ENCODE measurements at regions of chr1 and their contacts with region 1.

Region 1: GRCh38 chr1:11907275-11908094 is 18.7 kb downstream of the KIAA2013 start:
- DNase-seq: peak; percentile 93
- H3K4me3 Mint-ChIP-seq: peak overlapping the region; percentile 81
- H3K27ac Mint-ChIP-seq: peak overlapping the region; percentile 98
- H3K4me1 Mint-ChIP-seq: peaks cover 46% of the 10 kb centered on the region
- H3K27me3 Mint-ChIP-seq: peaks cover 16% of the 10 kb centered on the region

Region 2: DNA sequence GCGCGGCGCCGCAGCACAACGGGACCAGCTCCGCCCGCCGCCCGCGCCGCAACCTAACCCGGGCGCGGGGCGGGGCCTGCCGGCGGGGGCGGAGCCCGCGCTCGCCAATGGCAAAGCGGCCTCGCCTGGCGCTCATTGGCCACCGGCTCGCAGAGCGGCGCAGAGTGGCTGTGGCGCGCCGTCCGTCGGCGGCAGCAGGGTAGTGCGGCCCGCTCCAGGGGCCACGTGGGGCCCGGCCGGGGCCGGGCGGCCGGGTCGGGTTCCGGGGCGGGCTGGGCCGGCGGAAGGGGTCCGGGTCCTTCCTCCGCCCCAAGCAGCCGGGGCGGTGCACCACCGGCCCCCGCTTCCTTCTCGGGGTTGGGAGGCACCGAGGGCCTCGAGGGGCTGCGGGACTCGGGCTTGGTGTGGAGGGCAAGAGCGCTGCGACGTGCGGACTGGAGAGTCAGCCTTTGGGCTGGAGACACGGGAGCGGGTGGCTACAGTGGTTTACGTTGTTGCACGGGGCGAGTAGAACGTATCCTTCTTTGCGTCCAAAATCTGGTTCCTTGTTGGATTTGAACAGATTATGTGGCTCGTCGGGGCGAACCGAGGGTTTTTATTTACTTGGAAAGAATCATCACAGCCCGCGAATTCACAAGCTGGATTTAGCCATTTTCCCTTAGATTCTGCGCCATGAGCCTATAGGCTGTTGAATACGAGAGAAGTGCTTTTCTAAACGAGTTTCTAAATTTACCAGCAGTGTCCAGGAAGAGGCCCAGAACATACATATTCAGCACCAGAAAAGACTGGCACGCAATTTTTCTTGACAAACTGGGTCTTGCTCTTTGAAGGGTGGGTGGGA is 847.3 kb before region 1 on chr1 and contains the start of gene SRM:
- CTCF ChIA-PET with region 1: no interaction called
- POLR2A ChIA-PET with region 1: interaction called, 12 read pairs
- DNase-seq: peak; percentile 92
- H3K4me3 Mint-ChIP-seq: peak within 1 kb of the TSS; percentile 97
- H3K27ac Mint-ChIP-seq: peak within 1 kb of the TSS; percentile 85
- H3K4me1 Mint-ChIP-seq: peaks cover 51% of the 10 kb centered on the region
- H3K27me3 Mint-ChIP-seq: no peaks in the 10 kb centered on the region
- total RNA-seq, gene SRM: 69.3 to 72.1 TPM

Region 3: GRCh38 chr1:11434506-11434905 is 473.0 kb before region 1 on chr1:
- CTCF ChIA-PET with region 1: no interaction called
- POLR2A ChIA-PET with region 1: no interaction called
- DNase-seq: no peak
- H3K4me3 Mint-ChIP-seq: no peak overlapping the region
- H3K27ac Mint-ChIP-seq: no peak overlapping the region
- H3K4me1 Mint-ChIP-seq: no peaks in the 10 kb centered on the region
- H3K27me3 Mint-ChIP-seq: peaks cover 13% of the 10 kb centered on the region

Region 4: DNA sequence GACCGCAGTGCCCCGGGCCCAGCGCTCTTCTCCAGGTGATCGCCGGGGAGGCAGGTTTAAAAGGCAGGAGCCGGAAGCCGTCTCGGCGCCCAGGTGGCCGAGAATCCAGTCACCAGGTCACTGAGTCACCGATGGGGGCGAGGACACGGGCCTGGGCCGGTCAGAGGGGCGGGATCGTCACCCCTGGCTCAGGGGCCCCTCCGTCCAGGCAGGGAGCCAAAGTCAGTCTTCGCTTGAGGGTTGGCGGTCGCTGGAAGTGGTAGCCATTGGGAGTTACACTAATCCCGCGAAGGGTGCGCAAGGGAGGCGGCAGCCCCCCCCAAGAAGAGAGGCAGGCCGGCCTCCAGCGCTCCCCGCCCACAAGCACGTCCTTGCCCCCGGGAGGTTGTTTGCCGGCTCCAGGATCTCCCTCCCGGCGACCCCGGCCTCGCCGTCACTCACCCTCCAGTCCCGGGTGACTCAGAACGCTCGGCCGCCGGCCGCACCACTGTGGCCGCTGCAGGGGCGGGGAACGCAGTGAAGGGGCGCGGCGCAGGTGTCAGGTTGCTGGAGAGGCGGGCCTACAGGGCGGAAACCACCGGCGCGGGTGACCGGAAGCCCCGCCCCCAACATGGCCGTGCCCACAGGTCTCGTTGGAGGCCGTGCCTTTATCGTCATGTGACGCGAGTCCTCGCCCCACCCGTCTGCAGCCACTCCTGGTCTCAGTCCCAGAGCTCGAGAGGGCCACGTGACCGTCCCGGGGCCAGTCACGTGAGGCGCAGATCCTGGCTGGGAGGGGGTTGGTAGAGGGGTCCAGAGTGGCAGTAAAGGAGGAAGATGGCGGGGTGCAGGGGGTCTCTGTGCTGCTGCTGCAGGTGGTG is 101.8 kb before region 1 on chr1 and contains the starts of genes CLCN6 and MTHFR:
- CTCF ChIA-PET with region 1: interaction called, 6 read pairs
- POLR2A ChIA-PET with region 1: interaction called, 113 read pairs
- DNase-seq: peak; percentile 99
- H3K4me3 Mint-ChIP-seq: peak within 1 kb of the TSS; percentile 96
- H3K27ac Mint-ChIP-seq: peak within 1 kb of the TSS; percentile 88
- H3K4me1 Mint-ChIP-seq: peaks cover 70% of the 10 kb centered on the region
- H3K27me3 Mint-ChIP-seq: no peaks in the 10 kb centered on the region
- total RNA-seq, gene CLCN6: 18.8 to 19.5 TPM
- total RNA-seq, gene MTHFR: 29.4 to 32.2 TPM

Region 5: DNA sequence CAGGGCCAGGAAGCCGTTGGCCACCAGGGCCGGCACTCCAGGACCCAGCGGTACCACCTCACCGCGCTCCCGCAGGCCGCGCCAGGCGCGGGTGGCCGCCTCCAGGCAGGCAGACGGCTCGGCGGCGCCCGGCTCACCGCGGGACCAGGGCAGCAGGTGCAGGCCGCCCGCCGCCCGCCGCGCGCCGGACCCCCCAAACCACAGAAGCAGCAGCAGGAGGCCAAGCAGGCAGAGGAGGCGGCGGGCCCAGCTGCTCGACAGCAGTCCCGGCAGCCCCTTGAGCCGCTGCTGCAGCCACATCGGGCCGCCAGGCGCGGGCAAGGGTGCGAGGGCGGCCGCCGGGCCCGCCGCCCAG is 18.4 kb after region 1 on chr1:
- CTCF ChIA-PET with region 1: interaction called, 4 read pairs
- POLR2A ChIA-PET with region 1: interaction called, 166 read pairs
- DNase-seq: no peak
- H3K4me3 Mint-ChIP-seq: peak overlapping the region; percentile 85
- H3K27ac Mint-ChIP-seq: no peak overlapping the region
- H3K4me1 Mint-ChIP-seq: peaks cover 40% of the 10 kb centered on the region
- H3K27me3 Mint-ChIP-seq: no peaks in the 10 kb centered on the region

Region 6: DNA sequence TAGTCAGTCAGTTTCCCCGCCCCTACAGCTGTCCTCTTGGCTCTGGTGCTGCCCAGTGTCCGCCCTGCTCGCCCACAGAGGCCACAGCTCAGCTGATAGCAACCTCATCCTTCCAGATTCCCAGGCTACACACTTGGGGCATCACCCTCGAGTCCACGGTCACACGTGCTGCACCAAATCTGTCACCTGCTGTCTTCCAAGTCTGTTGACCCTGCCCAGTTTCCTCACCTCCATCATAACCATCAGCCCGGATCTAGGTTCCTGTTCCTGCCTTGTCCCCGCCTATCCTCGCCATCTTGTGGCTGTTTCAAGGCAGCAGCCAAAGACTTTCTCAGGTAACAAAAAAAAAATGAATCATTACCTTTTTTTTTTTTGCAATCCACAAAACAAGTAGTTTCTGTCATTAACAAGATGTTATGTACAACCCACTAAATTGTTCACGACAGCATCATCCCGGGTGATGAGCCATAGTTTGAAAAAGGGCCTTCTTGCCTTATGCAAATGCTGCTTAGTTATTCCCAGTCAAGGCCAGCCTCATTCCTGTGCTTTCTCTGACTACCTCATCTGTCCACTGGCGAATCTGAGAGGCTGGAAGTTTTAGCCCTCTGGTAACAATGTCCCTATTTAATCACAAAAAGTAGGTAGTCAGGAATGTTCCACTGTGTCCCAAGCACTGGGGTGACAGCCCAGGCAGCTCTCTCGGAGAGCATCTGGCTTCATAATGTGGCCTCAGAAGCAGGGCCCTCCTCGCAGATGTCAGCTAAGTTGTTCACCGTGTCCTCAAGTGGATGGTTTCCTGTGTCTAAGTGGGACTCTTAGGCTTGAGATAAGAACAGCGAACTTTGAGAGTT is 106.9 kb after region 1 on chr1:
- CTCF ChIA-PET with region 1: interaction called, 8 read pairs
- POLR2A ChIA-PET with region 1: interaction called, 124 read pairs
- DNase-seq: peak; percentile 46
- H3K4me3 Mint-ChIP-seq: peak overlapping the region; percentile 25
- H3K27ac Mint-ChIP-seq: peak overlapping the region; percentile 95
- H3K4me1 Mint-ChIP-seq: peaks cover 65% of the 10 kb centered on the region
- H3K27me3 Mint-ChIP-seq: no peaks in the 10 kb centered on the region

Region 7: GRCh38 chr1:12078938-12079861 is 171.7 kb after region 1 on chr1:
- CTCF ChIA-PET with region 1: interaction called, 3 read pairs
- POLR2A ChIA-PET with region 1: interaction called, 54 read pairs
- DNase-seq: peak; percentile 66
- H3K4me3 Mint-ChIP-seq: peak overlapping the region; percentile 56
- H3K27ac Mint-ChIP-seq: peak overlapping the region; percentile 79
- H3K4me1 Mint-ChIP-seq: peaks cover 74% of the 10 kb centered on the region
- H3K27me3 Mint-ChIP-seq: no peaks in the 10 kb centered on the region

Region 8: DNA sequence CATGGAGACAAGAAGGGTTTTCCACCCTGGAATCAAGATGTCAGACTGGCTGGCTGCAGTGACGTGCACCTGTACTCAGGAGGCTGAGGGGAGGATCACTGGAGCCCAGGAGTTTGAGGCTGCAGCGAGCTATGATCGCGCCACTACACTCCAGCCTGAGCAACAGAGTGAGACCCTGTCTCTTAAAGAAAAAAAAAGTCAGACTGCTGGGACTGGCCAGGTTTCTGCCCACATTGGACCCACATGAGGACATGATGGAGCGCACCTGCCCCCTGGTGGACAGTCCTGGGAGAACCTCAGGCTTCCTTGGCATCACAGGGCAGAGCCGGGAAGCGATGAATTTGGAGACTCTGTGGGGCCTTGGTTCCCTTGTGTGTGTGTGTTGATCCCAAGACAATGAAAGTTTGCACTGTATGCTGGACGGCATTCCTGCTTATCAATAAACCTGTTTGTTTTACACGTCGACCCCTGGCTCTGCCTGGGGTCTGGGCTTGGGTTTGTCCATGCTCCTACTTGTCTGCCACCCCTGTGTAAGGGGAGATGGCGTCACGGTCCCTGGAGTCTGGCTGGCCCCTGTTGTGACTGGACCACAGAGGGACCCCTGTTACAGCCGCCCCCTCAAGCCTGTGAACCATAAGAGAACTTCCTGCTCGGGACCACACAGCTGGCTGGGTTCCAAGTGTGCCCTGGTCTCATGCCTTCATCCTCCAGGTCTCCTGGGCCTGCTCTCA is 301.4 kb after region 1 on chr1:
- CTCF ChIA-PET with region 1: no interaction called
- POLR2A ChIA-PET with region 1: interaction called, 16 read pairs
- DNase-seq: peak; percentile 85
- H3K4me3 Mint-ChIP-seq: peak overlapping the region; percentile 20
- H3K27ac Mint-ChIP-seq: peak overlapping the region; percentile 68
- H3K4me1 Mint-ChIP-seq: peaks cover 66% of the 10 kb centered on the region
- H3K27me3 Mint-ChIP-seq: peaks cover 5% of the 10 kb centered on the region

Region 9: GRCh38 chr1:12249181-12249580 is 341.7 kb after region 1 on chr1:
- CTCF ChIA-PET with region 1: no interaction called
- POLR2A ChIA-PET with region 1: no interaction called
- DNase-seq: no peak
- H3K4me3 Mint-ChIP-seq: no peak overlapping the region
- H3K27ac Mint-ChIP-seq: no peak overlapping the region
- H3K4me1 Mint-ChIP-seq: no peaks in the 10 kb centered on the region
- H3K27me3 Mint-ChIP-seq: no peaks in the 10 kb centered on the region